ENCODE measurements at regions of chr12 and their contacts with region 1.

Region 1: GRCh38 chr12:120904197-120904773 is at the start of gene SPPL3:
- DNase-seq: peak; percentile 88
- H3K4me3 Mint-ChIP-seq: peak within 1 kb of the TSS; percentile 100
- H3K27ac Mint-ChIP-seq: peak within 1 kb of the TSS; percentile 94
- H3K4me1 Mint-ChIP-seq: peaks cover 21% of the 10 kb centered on the region
- H3K27me3 Mint-ChIP-seq: peaks cover 2% of the 10 kb centered on the region
- total RNA-seq, gene SPPL3: 27.3 and 31.2 TPM in 2 replicates

Region 2: GRCh38 chr12:120437754-120438494 is 466.4 kb before region 1 on chr12 and contains the start of gene COX6A1:
- intact Hi-C with region 1: loop called (anchors 5 kb)
- DNase-seq: peak; percentile 97
- H3K4me3 Mint-ChIP-seq: peak within 1 kb of the TSS; percentile 100
- H3K27ac Mint-ChIP-seq: peak within 1 kb of the TSS; percentile 98
- H3K4me1 Mint-ChIP-seq: peaks cover 31% of the 10 kb centered on the region
- H3K27me3 Mint-ChIP-seq: no peaks in the 10 kb centered on the region
- total RNA-seq, gene COX6A1: 352 and 365 TPM in 2 replicates

Region 3: DNA sequence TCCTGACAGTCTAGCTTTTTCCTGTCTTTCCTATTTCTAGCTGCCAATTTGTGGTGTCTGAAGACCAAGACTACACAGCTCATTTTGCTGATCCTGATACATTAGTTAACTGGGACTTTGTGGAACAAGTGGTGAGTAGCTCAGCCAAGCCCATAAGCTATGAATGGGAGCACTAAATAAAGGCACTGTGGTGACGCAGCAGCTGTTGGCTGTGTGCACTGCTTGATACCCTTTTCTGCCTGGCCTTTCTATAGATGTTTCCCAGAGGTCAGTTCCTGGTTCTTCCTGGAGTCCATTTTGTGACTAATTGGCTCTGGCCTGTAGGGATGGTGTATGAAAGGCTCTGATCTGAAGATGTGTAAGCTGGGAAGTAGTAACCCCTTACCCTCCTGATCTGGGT is 349.6 kb before region 1 on chr12:
- intact Hi-C with region 1: no loop called
- DNase-seq: no peak
- H3K4me3 Mint-ChIP-seq: no peak overlapping the region
- H3K27ac Mint-ChIP-seq: no peak overlapping the region
- H3K4me1 Mint-ChIP-seq: no peaks in the 10 kb centered on the region
- H3K27me3 Mint-ChIP-seq: no peaks in the 10 kb centered on the region

Region 4: DNA sequence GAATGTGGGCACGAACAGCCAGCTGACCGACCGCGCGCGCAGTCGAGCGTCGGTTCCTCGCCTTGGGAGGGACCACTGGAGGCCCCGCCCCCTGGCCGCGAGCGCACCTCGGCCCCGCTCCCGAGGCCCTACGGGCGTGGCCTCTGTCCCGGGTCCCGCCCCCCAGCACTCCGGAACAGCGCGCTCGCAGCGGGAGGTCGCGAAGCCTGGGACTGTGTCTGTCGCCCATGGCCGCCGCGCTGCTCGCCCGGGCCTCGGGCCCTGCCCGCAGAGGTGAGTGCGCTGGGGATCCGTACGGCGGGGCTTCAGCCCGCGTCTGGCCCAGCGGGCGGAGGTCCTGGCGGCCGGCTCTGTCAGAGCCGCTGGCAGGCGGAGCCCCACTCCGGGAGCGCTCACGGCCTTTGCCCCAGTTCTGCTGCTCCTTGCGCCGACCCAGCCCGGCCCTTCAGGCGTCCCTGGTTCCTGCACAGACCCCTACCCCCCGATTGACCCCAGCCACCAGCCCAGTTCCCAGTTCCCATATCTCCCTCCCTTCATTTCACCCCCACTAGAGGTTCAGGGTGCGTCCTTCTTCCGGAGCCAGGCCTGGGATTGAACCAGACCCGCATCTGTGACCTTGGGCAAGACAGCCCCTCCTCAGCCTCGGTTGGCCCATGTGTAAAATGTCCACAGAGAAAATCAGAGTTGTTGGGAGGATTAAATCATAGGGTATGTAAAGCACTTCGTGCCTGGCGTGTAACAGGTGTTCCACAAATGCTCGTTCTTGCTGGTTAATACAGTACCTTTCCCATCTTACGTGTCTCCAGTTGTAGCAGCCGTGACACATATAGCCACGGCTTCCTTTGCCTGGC is 178.4 kb before region 1 on chr12 and contains the start of gene ACADS:
- intact Hi-C with region 1: loop called (anchors 1 kb)
- DNase-seq: peak; percentile 89
- H3K4me3 Mint-ChIP-seq: peak within 1 kb of the TSS; percentile 94
- H3K27ac Mint-ChIP-seq: peak within 1 kb of the TSS; percentile 87
- H3K4me1 Mint-ChIP-seq: peaks cover 22% of the 10 kb centered on the region
- H3K27me3 Mint-ChIP-seq: no peaks in the 10 kb centered on the region
- total RNA-seq, gene ACADS: 10.8 and 11.1 TPM in 2 replicates

Region 5: GRCh38 chr12:120856980-120857379 is 47.3 kb before region 1 on chr12:
- intact Hi-C with region 1: loop called (anchors 5 kb)
- DNase-seq: no peak
- H3K4me3 Mint-ChIP-seq: no peak overlapping the region
- H3K27ac Mint-ChIP-seq: no peak overlapping the region
- H3K4me1 Mint-ChIP-seq: peaks cover 48% of the 10 kb centered on the region
- H3K27me3 Mint-ChIP-seq: no peaks in the 10 kb centered on the region

Region 6: DNA sequence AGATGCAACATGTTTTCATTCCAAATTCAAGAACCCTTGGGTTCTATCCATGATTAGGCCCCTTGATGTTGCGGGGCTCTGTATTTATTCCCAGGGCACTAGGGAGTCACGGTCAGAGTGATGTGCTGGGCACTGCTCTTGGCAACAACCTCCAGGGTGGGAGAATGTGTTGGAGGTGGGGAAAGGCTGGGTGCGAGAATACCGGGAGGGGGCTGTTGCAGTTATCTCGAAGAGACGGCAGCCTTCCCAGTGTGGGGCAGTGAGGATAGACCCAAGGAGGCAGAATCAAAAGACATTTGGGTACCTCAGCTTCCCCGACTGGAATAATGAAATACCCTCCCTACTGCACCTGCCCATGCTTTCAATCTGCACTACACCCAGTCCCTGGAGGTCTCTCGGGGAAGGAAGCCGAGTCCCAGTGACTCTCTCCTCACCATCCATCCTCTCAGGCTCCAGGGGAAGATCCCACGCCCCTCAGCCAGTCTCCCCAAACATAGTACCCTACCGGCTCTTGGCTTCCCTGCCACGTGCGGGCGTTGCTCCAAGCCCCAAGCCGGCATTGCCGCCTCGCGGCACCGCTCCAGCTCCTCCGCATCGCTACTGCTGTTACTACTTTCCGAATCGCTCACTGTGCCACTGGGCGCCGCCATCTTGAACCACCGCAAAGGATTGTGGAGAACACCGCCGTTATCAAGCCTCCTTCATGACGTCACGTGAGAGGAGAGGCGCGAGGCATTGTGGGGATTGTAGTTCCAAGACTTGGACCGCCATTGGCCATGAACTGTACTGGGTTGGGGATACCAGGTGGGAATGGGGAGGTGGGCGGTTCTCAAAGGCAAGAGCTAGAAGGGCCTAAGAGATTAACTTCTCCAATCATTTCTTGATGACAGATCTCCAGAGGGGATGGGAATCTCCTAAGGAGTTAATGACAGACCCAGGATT is 111.8 kb after region 1 on chr12 and contains the start of gene C12orf43:
- intact Hi-C with region 1: loop called (anchors 1 kb)
- DNase-seq: peak; percentile 90
- H3K4me3 Mint-ChIP-seq: peak within 1 kb of the TSS; percentile 100
- H3K27ac Mint-ChIP-seq: peak within 1 kb of the TSS; percentile 99
- H3K4me1 Mint-ChIP-seq: peaks cover 28% of the 10 kb centered on the region
- H3K27me3 Mint-ChIP-seq: no peaks in the 10 kb centered on the region
- total RNA-seq, gene C12orf43: 34.6 and 35.3 TPM in 2 replicates

Region 7: DNA sequence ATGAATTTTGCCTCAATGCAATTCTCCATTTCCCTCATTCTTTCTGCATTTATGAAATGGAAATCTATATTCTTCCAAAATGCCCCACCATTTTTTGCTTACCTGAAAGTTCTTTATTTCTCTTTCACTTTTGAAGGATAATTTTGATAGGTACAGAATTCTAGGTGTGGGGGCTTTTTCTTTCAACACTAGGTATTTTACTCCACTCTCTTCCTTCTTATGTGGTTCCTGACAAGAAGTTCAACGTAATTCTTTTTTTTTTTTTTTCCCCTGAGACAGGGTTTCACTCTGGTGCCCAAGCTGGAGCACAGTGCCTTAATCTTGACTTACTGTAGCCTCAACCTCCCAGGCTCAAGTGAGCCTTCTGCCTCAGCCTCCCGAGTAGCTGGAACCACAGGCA is 161.1 kb after region 1 on chr12:
- intact Hi-C with region 1: no loop called
- DNase-seq: no peak
- H3K4me3 Mint-ChIP-seq: no peak overlapping the region
- H3K27ac Mint-ChIP-seq: no peak overlapping the region
- H3K4me1 Mint-ChIP-seq: peaks cover 15% of the 10 kb centered on the region
- H3K27me3 Mint-ChIP-seq: peaks cover 9% of the 10 kb centered on the region

Region 8: GRCh38 chr12:121296618-121297434 is 392.5 kb after region 1 on chr12 and contains the start of gene CAMKK2:
- intact Hi-C with region 1: no loop called
- DNase-seq: peak; percentile 91
- H3K4me3 Mint-ChIP-seq: peak within 1 kb of the TSS; percentile 94
- H3K27ac Mint-ChIP-seq: peak within 1 kb of the TSS; percentile 88
- H3K4me1 Mint-ChIP-seq: peaks cover 35% of the 10 kb centered on the region
- H3K27me3 Mint-ChIP-seq: no peaks in the 10 kb centered on the region
- total RNA-seq, gene CAMKK2: 38.1 and 41.0 TPM in 2 replicates

Region 9: DNA sequence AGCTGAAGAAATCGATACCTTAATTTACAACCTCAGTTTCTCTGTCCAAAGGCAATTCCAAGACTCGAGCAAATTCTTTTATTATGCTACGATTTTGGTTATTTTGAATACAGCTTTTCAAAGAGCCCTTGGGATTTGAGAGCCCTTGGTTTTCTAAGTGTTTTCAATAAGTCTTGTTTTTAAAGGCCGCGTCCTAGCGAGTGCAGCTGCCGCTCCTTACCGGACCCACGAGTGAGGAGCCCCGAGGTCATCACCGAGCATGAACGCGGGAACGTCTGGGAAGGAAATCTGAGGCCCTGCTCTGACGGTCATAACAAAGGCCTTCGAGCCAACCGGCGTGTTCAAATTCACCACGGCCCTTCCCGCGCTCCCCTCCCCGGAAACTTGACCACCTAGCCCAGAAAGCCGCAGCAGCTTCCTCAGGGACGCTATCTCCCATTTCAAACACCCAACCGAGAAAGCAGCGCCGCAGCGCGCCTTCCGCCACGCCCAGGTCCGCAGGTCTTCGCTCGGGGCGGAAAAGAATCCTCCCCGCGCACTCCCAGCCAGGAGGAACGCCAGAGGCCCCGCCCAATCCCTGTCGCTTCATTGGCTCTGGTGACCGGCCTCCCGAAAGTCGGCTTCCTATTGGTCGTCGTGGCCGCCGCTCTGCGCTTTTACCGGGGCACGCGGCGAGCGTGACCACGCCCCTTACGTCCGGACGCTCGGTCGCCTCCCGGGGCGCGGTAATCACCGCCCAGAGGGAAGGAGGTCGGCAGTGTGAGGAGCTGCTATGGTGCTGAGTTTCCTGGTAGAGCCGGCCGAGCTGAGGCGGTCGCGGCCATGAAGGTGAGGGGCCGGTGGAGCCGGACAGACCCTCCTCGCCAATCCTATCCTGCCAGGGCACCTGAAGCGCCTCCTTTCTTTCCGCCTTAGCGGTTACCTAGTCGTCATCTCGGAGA is 495.4 kb after region 1 on chr12 and contains the start of gene RNF34:
- intact Hi-C with region 1: loop called (anchors 5 kb)
- DNase-seq: peak; percentile 98
- H3K4me3 Mint-ChIP-seq: peak within 1 kb of the TSS; percentile 92
- H3K27ac Mint-ChIP-seq: peak within 1 kb of the TSS; percentile 94
- H3K4me1 Mint-ChIP-seq: peaks cover 31% of the 10 kb centered on the region
- H3K27me3 Mint-ChIP-seq: no peaks in the 10 kb centered on the region
- total RNA-seq, gene RNF34: 80.6 and 83.7 TPM in 2 replicates